Ovary (tissue), 10 donors: ENCODE measurements at regions of chr19 and their contacts with region 1.

Region 1: DNA sequence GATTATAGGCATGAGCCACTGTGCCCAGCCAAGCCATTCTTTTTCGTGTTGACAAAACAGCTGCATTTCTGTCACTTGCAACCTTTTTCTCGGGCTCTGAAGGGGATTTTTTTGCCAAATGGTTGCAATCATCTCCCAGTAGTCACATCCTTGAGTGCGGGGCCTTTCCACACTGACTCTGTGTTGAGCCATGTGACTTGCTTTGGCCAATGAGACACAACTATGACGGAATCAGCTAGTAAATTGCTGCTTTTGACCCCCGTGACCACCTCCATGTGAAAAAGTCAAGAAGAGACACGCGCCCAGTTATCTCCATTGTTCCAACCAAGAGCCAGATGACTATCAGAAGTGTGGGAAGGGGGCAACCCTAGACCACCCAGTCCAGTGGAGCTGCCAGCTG is 18.3 kb downstream of the NPHS1 start:
- DNase-seq: no peak
- H3K4me3 ChIP-seq: no peak overlapping the region
- H3K27ac ChIP-seq: no peak overlapping the region
- H3K4me1 ChIP-seq: no peaks in the 10 kb centered on the region
- H3K27me3 ChIP-seq: no peaks in the 10 kb centered on the region
- CTCF ChIP-seq: no peak
- EP300 ChIP-seq: no peak
- POLR2A ChIP-seq: no peak

Region 2: DNA sequence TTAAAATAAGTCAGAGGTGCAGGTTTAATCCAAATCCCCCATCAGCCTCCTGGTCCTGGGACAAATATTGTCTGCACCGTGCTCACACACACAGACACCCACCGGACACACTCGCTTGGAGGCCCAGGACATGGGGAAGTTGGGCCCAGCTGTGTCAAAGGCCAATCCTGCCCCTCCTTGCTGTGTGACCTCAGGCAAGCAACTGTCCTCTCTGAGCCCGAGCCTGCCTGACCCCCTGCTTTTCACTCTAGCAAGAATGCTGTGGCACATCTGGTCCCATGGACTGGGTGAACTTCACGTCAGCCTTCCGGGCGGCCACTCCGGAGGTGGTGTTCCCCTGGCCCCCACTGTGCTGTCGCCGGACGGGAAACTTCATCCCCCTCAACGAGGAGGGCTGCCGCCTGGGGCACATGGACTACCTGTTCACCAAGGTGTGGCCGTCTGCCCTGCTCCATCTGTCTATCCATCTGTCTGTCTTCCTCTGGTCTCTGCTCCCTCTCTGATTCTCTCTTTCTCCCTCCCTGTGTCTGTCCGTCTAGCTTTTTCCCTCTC is 158.3 kb before region 1 on chr19:
- intact Hi-C with region 1: loop called in 1 of 4 experiments (anchors 5 kb)
- DNase-seq: no peak
- H3K4me3 ChIP-seq: no peak overlapping the region
- H3K27ac ChIP-seq: no peak overlapping the region
- H3K4me1 ChIP-seq: peaks cover 2% of the 10 kb centered on the region
- H3K27me3 ChIP-seq: no peaks in the 10 kb centered on the region
- CTCF ChIP-seq: no peak
- EP300 ChIP-seq: no peak
- POLR2A ChIP-seq: no peak